ENCODE measurements at regions of chr2 and their contacts with region 1.

Region 1: DNA sequence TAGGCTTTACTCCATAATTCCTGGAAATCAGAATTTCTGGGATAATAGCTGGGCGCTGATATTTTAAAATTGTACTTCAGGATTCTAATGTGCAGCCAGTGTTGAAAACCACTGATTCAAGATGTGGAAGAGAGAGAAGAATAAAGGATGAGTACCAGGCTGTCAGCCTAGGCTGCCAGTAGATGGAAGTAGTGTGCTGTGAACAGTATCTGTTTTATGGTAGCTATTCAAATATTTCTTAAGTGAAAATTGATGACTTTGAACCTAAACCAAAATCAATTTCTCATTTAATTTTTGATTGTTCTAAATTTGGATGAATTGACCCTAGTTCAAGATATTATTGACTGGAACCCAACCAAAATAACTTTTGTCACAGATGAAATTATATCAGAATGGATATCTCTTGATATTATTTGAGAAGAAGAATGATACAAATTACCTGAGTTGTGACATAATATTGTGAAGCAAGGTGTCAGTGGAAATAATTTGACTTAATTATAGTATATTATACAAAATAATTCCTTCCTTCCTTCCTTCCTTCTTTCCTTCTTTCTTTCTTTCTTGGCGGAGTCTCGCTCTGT is 88.1 kb downstream of the COMMD1 start:
- DNase-seq: peak; percentile 38
- H3K4me3 Mint-ChIP-seq: no peak overlapping the region
- H3K27ac Mint-ChIP-seq: no peak overlapping the region
- H3K4me1 Mint-ChIP-seq: no peaks in the 10 kb centered on the region
- H3K27me3 Mint-ChIP-seq: no peaks in the 10 kb centered on the region

Region 2: GRCh38 chr2:62014102-62014501 is 20.6 kb after region 1 on chr2:
- CTCF ChIA-PET with region 1: no interaction called
- DNase-seq: no peak
- H3K4me3 Mint-ChIP-seq: no peak overlapping the region
- H3K27ac Mint-ChIP-seq: no peak overlapping the region
- H3K4me1 Mint-ChIP-seq: peaks cover 5% of the 10 kb centered on the region
- H3K27me3 Mint-ChIP-seq: no peaks in the 10 kb centered on the region

Region 3: GRCh38 chr2:62415019-62415431 is 421.5 kb after region 1 on chr2:
- CTCF ChIA-PET with region 1: interaction called, 74 read pairs
- DNase-seq: no peak
- H3K4me3 Mint-ChIP-seq: no peak overlapping the region
- H3K27ac Mint-ChIP-seq: peak overlapping the region; percentile 53
- H3K4me1 Mint-ChIP-seq: peaks cover 15% of the 10 kb centered on the region
- H3K27me3 Mint-ChIP-seq: peaks cover 11% of the 10 kb centered on the region